Activated CD4-positive, alpha-beta memory T cell treated with anti-CD3 and anti-CD28 coated beads for 36 hours (primary cell): ENCODE measurements at regions of chr6 and their contacts with region 1.

Region 1: DNA sequence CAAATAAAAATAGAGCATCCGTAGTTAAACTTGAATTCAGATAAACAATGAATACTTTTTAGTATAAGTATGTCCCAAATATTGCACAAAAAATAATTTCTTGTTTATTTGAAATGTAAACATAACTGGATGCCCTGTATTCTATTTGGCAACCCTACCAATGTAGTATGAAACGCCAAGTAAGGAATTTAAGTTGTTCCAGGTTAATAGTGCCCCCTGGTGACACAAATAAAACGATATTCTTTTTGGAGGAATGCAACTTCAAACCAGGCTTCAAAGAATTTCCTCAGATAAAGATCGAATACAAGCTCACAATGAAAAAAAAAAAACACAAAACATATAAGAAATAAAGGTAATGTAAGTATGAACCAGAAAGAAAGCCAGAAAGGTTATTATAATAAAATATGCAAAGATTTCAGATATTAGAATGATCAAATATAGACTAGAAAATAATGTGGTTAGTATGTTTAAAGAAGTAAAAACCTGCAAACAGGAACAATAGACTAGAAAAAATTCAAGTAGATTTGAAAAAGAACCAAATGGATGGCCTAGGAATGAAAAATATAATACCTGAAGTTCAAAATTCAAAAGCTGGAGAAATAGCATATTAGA is 18.4 kb upstream of the AKAP7 start:
- DNase-seq: no peak
- H3K4me3 Mint-ChIP-seq: no peak overlapping the region
- H3K27ac Mint-ChIP-seq: no peak overlapping the region
- H3K4me1 Mint-ChIP-seq: no peaks in the 10 kb centered on the region
- H3K27me3 Mint-ChIP-seq: peaks cover 1% of the 10 kb centered on the region

Region 2: DNA sequence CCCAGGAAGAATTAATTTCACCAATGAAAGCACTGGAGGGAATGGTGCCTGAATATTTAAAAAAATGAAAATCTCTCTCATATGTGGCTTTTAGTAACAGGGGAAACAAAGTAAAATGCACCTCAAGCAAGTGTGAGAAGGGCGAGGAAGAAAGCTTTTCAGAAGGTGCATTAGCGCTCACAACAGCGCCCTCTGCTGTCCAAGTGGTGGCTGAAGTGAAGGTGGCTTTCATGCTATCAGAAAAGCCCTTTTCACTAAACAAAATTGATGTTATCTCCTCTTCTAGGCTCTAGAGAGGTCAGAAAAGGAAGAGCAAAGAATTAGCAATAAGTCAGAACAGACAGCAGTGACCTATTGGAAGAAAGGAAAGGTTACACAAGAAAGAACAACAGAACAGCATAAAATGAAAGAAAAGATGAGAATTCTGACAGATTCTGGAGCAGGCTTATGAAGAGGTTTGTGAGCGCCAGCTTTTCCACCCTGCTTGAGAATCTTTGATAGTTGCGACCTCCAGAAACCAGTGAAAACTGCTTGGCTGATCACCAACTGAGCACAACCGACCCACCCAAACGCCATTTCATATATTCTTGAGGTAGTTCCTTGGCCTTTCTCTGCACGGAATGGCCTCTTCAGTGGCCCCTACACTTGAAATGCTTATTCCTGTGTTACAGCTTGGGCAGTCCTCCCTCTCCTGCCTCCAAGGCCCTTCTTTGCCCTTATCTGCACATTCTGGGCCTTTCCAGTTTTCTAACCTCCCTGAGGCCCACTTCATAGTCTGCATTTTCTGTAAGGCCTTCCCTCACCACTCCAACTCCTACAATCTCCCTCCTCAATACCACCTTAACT is 244.4 kb before region 1 on chr6:
- CTCF ChIA-PET with region 1: interaction called, 15 read pairs
- POLR2A ChIA-PET with region 1: no interaction called
- intact Hi-C with region 1: no loop called
- DNase-seq: peak; percentile 79
- H3K4me3 Mint-ChIP-seq: no peak overlapping the region
- H3K27ac Mint-ChIP-seq: no peak overlapping the region
- H3K4me1 Mint-ChIP-seq: no peaks in the 10 kb centered on the region
- H3K27me3 Mint-ChIP-seq: no peaks in the 10 kb centered on the region

Region 3: DNA sequence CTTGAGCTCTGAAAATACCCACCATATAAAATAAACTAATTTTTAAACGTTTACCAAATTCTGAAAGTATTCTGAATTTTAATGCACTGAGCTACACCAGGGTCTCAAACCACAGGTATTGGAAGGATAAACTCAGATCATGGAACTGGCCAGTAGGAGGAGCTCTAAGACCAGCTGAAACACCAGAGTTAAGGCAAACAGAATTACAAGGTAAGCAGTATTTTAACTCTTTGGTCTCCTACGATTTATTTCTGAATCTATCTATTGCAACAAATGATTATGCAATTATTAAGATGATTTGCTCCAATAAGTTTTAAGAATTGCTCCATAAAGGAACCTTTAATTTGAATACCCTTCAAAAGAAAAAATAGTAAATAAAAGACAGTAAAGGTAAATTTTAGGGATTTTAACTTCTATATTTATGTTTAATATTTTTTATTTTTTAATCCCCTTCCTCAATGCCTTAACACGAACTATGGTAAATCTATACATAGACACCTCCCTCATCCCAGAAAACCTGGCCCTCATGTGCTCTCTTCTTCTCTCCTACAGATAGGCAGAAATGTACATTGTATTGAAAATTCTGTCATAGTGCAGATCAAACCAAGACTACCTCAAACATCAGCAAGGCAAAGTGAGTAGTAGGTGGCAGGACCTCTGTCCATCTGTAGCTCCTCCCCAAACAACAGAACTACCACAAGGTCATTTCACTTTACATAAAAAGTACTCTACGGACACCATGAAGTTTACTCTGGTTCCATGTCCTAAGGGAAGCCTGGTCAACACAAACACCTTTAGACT is 231.3 kb before region 1 on chr6:
- CTCF ChIA-PET with region 1: interaction called, 172 read pairs
- POLR2A ChIA-PET with region 1: no interaction called
- intact Hi-C with region 1: loop called (anchors 1 kb)
- DNase-seq: peak; percentile 72
- H3K4me3 Mint-ChIP-seq: no peak overlapping the region
- H3K27ac Mint-ChIP-seq: no peak overlapping the region
- H3K4me1 Mint-ChIP-seq: no peaks in the 10 kb centered on the region
- H3K27me3 Mint-ChIP-seq: no peaks in the 10 kb centered on the region

Region 4: DNA sequence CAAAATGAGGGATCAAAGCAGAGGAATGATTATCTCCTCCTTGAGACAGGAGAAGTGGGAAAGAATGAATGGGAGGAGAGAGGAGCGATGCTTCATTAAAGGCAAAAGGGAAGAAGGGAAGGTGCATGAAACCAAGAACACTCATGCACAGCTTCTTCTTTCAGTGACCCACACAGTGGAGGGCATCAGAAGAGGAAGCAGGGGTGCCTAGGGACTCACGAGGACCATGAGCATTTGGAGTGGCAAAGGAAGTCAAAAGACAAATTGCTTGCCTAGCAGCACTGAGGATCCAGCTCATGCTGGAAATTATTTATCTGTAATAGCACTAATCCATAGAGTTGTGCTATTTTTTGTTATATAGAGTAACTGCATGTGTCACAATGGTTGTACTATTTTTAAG is 223.6 kb before region 1 on chr6:
- CTCF ChIA-PET with region 1: interaction called, 172 read pairs
- POLR2A ChIA-PET with region 1: no interaction called
- intact Hi-C with region 1: no loop called
- DNase-seq: no peak
- H3K4me3 Mint-ChIP-seq: no peak overlapping the region
- H3K27ac Mint-ChIP-seq: no peak overlapping the region
- H3K4me1 Mint-ChIP-seq: no peaks in the 10 kb centered on the region
- H3K27me3 Mint-ChIP-seq: no peaks in the 10 kb centered on the region

Region 5: DNA sequence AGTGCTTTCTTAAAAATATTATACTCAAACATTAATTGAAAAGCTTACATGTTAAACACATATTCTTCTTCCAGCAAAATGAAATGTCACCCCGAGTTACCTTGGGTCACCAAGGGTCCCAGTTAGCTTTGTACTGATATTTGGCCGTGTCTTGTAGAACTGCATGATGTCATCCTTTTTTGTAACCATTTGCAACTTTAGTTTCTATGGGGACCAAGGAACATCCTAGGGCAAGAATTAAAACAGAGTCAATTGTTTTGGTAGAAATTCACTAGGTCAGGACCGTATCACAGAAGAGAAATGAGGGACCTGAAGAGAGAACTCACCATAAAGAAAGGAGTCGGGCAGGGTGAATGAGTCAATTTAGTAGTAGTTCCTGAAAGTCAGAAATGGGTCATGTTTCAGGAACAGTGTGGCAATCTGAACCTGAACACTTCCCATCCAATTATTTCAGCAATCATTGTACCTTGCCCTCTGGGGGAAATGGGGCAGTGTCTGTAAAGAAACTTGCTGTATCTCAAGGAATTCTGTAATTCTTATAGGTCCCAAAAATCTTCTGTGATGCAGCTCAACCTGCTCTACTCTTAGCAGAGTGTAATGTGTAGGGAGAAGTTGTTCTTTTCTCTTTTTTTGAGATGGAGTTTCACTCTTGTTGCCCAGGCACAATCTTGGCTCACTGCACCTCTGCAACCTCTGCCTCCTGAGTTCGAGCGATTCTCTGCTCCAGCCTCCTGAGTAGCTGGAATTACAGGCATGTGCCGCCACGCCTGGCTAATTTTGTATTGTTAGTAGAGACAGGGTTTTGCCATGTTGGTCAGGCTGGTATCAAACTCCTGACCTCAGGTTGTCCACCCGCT is 13.1 kb after region 1 on chr6:
- CTCF ChIA-PET with region 1: interaction called, 11 read pairs
- POLR2A ChIA-PET with region 1: no interaction called
- intact Hi-C with region 1: no loop called
- DNase-seq: no peak
- H3K4me3 Mint-ChIP-seq: no peak overlapping the region
- H3K27ac Mint-ChIP-seq: no peak overlapping the region
- H3K4me1 Mint-ChIP-seq: peaks cover under 1% of the 10 kb centered on the region
- H3K27me3 Mint-ChIP-seq: peaks cover 9% of the 10 kb centered on the region